PC-3 (cell line): ENCODE measurements at regions of chr16 and their contacts with region 1.

Region 1: GRCh38 chr16:50553182-50553710 is 5.0 kb downstream of the NKD1 start:
- DNase-seq: no peak
- ATAC-seq: no peak
- H3K4me3 ChIP-seq: no peak overlapping the region
- H3K27ac ChIP-seq: no peak overlapping the region
- H3K4me1 ChIP-seq: no peaks in the 10 kb centered on the region
- H3K27me3 ChIP-seq: peaks cover 9% of the 10 kb centered on the region
- CTCF ChIP-seq: no peak

Region 2: GRCh38 chr16:50228364-50228868 is 324.8 kb before region 1 on chr16:
- CTCF ChIA-PET with region 1: no interaction called
- POLR2A ChIA-PET with region 1: no interaction called
- intact Hi-C with region 1: no loop called
- DNase-seq: no peak
- ATAC-seq: no peak
- H3K4me3 ChIP-seq: no peak overlapping the region
- H3K27ac ChIP-seq: no peak overlapping the region
- H3K4me1 ChIP-seq: no peaks in the 10 kb centered on the region
- H3K27me3 ChIP-seq: no peaks in the 10 kb centered on the region
- CTCF ChIP-seq: no peak

Region 3: GRCh38 chr16:50281964-50282538 is 271.2 kb before region 1 on chr16:
- CTCF ChIA-PET with region 1: no interaction called
- POLR2A ChIA-PET with region 1: no interaction called
- intact Hi-C with region 1: no loop called
- DNase-seq: no peak
- ATAC-seq: no peak
- H3K4me3 ChIP-seq: no peak overlapping the region
- H3K27ac ChIP-seq: no peak overlapping the region
- H3K4me1 ChIP-seq: no peaks in the 10 kb centered on the region
- H3K27me3 ChIP-seq: no peaks in the 10 kb centered on the region
- CTCF ChIP-seq: no peak

Region 4: DNA sequence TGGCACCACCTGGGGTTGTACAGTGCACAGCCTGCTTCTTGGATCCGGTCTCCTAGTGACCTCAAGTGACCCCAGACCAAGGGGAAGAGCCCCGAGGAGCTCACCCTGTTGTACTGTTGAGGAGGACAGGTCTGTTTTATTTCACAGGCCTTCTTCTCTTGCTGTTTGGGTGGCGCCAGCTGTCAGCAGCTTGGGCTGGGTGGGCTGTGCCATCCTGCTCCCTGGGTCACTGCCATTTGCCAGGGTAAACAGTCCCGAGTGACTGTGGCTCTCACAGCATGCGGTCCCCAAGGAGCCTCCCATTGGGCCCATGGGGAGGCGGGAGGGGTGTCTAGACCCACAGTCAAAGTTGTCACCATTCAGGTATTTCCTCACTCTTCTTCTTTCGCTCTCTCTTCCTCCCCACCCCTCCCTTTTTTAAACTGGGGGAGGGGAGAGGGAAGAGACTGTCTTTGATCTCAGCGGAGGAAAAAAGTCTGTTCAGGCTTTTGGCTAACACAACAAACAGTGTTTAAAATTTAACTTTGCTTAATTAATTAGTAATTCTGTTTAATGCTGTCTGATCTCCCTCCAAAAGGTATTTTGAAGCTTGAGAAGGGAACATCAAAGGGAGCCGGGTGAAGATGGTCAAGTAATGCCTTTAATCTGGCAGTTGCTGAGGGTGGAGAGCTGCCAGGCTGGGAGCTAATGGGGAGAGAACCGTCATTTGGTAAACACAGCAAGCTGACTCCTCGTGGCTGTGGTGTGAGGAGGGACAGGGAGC is 63.8 kb after region 1 on chr16:
- CTCF ChIA-PET with region 1: no interaction called
- POLR2A ChIA-PET with region 1: no interaction called
- intact Hi-C with region 1: loop called (anchors 2 kb)
- DNase-seq: no peak
- ATAC-seq: no peak
- H3K4me3 ChIP-seq: no peak overlapping the region
- H3K27ac ChIP-seq: no peak overlapping the region
- H3K4me1 ChIP-seq: no peaks in the 10 kb centered on the region
- H3K27me3 ChIP-seq: no peaks in the 10 kb centered on the region
- CTCF ChIP-seq: no peak